B cell (primary cell): ENCODE measurements at regions of chr20 and their contacts with region 1.

Region 1: DNA sequence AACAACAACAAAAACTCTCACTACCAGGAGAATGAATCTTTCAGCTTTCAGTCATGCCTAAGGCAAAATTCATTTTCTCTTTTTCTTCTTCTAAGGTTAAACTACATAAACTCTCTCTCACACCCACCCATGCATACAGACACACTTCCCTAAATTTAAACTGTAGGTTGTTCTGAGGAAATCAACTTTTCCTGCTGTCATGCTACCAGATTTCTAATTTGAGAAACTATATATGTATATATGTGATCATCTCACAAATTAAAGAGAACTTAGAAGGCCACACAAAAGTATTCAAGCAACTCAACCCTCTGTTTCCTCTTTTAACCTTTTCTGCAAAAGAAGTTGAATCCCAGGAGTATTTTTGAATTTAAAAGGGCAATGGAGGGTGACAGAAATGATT is 532.5 kb downstream of the KIF16B start:
- DNase-seq: peak; percentile 78
- ATAC-seq: peak; percentile 82
- H3K4me3 ChIP-seq: peak overlapping the region in 4 of 5 experiments; percentile 8 to 30 (median 19)
- H3K4me3 Mint-ChIP-seq: peak overlapping the region; percentile 52
- H3K27ac ChIP-seq: peak overlapping the region; percentile 83 to 86
- H3K27ac Mint-ChIP-seq: peak overlapping the region; percentile 61
- H3K4me1 ChIP-seq: peaks cover 59 to 71% of the 10 kb centered on the region in 2 donors
- H3K4me1 Mint-ChIP-seq: peaks cover 78% of the 10 kb centered on the region
- H3K27me3 ChIP-seq: no peaks in the 10 kb centered on the region
- H3K27me3 Mint-ChIP-seq: no peaks in the 10 kb centered on the region
- CTCF ChIP-seq: no peak

Region 2: GRCh38 chr20:15986690-15987089 is 54.1 kb before region 1 on chr20:
- CTCF ChIA-PET with region 1: no interaction called
- POLR2A ChIA-PET with region 1: no interaction called
- intact Hi-C with region 1: loop called (anchors 5 kb)
- DNase-seq: peak; percentile 31
- ATAC-seq: peak; percentile 80
- H3K4me3 ChIP-seq: peak overlapping the region in 3 of 5 experiments; percentile 33 to 65 (median 35)
- H3K4me3 Mint-ChIP-seq: peak overlapping the region; percentile 82
- H3K27ac ChIP-seq: peak overlapping the region; percentile 63 to 73
- H3K27ac Mint-ChIP-seq: peak overlapping the region; percentile 92
- H3K4me1 ChIP-seq: peaks cover 21 to 22% of the 10 kb centered on the region in 2 donors
- H3K4me1 Mint-ChIP-seq: peaks cover 31% of the 10 kb centered on the region
- H3K27me3 ChIP-seq: no peaks in the 10 kb centered on the region
- H3K27me3 Mint-ChIP-seq: no peaks in the 10 kb centered on the region
- CTCF ChIP-seq: no peak

Region 3: GRCh38 chr20:16069389-16070010 is 28.8 kb after region 1 on chr20:
- CTCF ChIA-PET with region 1: no interaction called
- POLR2A ChIA-PET with region 1: no interaction called
- intact Hi-C with region 1: loop called (anchors 1 kb)
- DNase-seq: peak; percentile 70
- ATAC-seq: peak; percentile 82
- H3K4me3 ChIP-seq: no peak overlapping the region
- H3K4me3 Mint-ChIP-seq: peak overlapping the region; percentile 62
- H3K27ac ChIP-seq: peak overlapping the region; percentile 67 to 80
- H3K27ac Mint-ChIP-seq: peak overlapping the region; percentile 90
- H3K4me1 ChIP-seq: peaks cover 38 to 48% of the 10 kb centered on the region in 2 donors
- H3K4me1 Mint-ChIP-seq: peaks cover 59% of the 10 kb centered on the region
- H3K27me3 ChIP-seq: no peaks in the 10 kb centered on the region
- H3K27me3 Mint-ChIP-seq: no peaks in the 10 kb centered on the region
- CTCF ChIP-seq: no peak

Region 4: GRCh38 chr20:16083639-16084280 is 43.0 kb after region 1 on chr20:
- CTCF ChIA-PET with region 1: no interaction called
- POLR2A ChIA-PET with region 1: no interaction called
- intact Hi-C with region 1: loop called (anchors 5 kb)
- DNase-seq: peak; percentile 24
- ATAC-seq: peak; percentile 17
- H3K4me3 ChIP-seq: peak overlapping the region in 2 of 5 experiments; percentile 16 to 25
- H3K4me3 Mint-ChIP-seq: peak overlapping the region; percentile 10
- H3K27ac ChIP-seq: peak overlapping the region; percentile 9 to 71
- H3K27ac Mint-ChIP-seq: peak overlapping the region; percentile 47
- H3K4me1 ChIP-seq: peaks cover 37 to 59% of the 10 kb centered on the region in 2 donors
- H3K4me1 Mint-ChIP-seq: peaks cover 48% of the 10 kb centered on the region
- H3K27me3 ChIP-seq: no peaks in the 10 kb centered on the region
- H3K27me3 Mint-ChIP-seq: no peaks in the 10 kb centered on the region
- CTCF ChIP-seq: no peak

Region 5: GRCh38 chr20:16241915-16242314 is 201.2 kb after region 1 on chr20:
- CTCF ChIA-PET with region 1: interaction called, 3 read pairs
- POLR2A ChIA-PET with region 1: no interaction called
- intact Hi-C with region 1: loop called (anchors 10 kb)
- DNase-seq: peak; percentile 46
- ATAC-seq: peak; percentile 43
- H3K4me3 ChIP-seq: no peak overlapping the region
- H3K4me3 Mint-ChIP-seq: no peak overlapping the region
- H3K27ac ChIP-seq: no peak overlapping the region
- H3K27ac Mint-ChIP-seq: no peak overlapping the region
- H3K4me1 ChIP-seq: peaks cover 10 to 11% of the 10 kb centered on the region in 2 donors
- H3K4me1 Mint-ChIP-seq: peaks cover 10% of the 10 kb centered on the region
- H3K27me3 ChIP-seq: no peaks in the 10 kb centered on the region
- H3K27me3 Mint-ChIP-seq: peaks cover 5% of the 10 kb centered on the region
- CTCF ChIP-seq: peak; percentile 37

Region 6: DNA sequence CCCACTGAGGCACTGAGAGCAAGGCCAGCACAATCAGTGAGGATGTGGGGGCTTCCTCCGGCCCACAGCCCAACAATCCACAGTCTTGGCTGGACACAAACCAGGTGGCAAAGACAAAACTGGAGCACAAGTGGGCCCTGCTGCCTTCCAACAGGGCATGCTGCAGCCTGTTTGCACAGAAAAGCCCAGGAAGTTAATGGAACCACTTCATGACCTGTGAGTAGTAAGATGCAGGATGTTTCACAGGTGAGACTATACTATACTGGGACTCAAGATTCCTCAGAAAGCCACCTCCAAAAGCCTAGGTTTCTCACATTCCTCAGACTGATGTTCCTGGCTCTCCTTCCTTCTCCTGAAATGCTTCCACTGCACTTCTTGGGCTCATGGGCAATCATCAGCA is 297.0 kb after region 1 on chr20:
- CTCF ChIA-PET with region 1: no interaction called
- POLR2A ChIA-PET with region 1: no interaction called
- intact Hi-C with region 1: no loop called
- DNase-seq: no peak
- ATAC-seq: no peak
- H3K4me3 ChIP-seq: no peak overlapping the region
- H3K4me3 Mint-ChIP-seq: no peak overlapping the region
- H3K27ac ChIP-seq: no peak overlapping the region
- H3K27ac Mint-ChIP-seq: no peak overlapping the region
- H3K4me1 ChIP-seq: no peaks in the 10 kb centered on the region
- H3K4me1 Mint-ChIP-seq: no peaks in the 10 kb centered on the region
- H3K27me3 ChIP-seq: no peaks in the 10 kb centered on the region
- H3K27me3 Mint-ChIP-seq: no peaks in the 10 kb centered on the region
- CTCF ChIP-seq: no peak